PC-3 (cell line): ENCODE measurements at regions of chr16 and their contacts with region 1.

Region 1: DNA sequence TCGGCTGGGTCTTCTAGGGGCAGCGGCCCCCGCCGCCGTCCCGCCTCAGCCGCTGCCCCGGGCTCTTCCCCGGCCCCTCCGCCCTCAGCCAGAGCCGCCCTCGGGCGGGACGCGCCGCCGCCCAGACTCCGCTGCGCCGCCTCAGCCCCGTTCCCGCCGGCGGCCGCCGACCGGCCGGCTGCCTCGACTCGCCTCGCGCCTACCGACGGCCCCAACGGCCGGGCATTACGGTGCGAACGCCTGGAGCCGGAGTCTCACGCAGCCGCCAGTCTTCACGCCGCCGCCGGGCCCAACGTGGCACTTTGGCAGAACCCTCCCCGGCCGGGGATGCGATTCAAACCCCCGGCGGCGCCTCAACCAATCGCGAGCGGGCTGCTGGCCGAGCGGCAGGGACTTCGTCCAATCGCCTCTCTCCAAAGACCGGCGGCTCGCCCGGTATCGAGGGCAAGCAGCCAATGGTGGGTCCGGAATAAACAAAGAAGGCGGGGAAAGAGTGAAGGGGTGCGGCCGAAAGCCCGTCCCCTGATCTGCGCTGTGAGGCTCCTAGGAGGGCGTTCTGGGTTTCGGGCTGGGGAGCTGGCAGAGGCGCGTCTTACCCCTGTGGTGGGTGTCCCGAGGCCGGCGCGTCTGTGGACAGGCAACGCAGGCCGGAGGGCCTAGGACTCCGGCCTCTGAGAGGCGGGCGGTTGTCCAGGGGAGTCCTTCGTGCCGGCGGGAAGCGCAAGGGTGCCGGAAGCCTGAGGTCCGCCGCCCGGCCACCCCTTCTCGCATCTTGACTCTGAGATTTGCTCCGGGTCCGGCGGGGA is at the start of gene CDR2:
- DNase-seq: peak; percentile 95
- ATAC-seq: peak; percentile 83
- H3K4me3 ChIP-seq: peak within 1 kb of the TSS; percentile 87
- H3K27ac ChIP-seq: no peak within 1 kb of the TSS
- H3K4me1 ChIP-seq: peaks cover 29% of the 10 kb centered on the region
- H3K27me3 ChIP-seq: no peaks in the 10 kb centered on the region
- CTCF ChIP-seq: no peak
- total RNA-seq, gene CDR2: 14.1 and 14.7 TPM in 2 replicates

Region 2: DNA sequence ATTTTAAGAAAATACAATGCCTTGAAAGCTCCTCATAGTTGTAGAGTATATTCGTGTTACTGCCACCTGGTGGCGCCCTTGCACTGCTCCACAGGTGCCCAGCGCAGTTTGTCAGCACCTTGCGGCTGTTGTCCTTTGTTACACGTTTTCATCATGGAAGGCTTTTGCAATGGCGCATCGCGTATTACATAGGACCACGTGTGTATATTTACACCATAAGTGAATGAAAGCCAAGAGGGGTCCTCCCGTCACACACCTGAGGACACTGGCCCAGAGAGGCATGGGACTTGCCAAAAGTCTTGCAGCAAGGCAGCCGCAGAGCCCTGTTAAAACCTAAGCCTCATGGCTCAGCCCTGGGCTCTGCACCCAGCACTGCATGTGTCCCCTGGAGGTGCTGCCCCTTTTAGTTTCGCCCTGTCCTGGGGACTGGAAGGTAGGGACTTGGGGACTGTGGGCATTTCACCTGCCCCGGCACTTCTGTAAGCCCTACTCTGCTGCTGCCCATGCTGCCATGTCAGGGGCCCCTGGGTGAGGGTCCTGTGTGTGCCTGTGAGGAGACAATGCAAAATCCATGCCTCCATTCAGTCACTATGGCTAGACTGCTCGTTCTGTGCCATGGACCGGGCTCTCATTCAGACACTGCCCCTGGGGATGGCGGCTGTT is 53.0 kb before region 1 on chr16:
- CTCF ChIA-PET with region 1: interaction called, 3 read pairs
- POLR2A ChIA-PET with region 1: no interaction called
- intact Hi-C with region 1: loop called (anchors 10 kb)
- DNase-seq: peak; percentile 55
- ATAC-seq: peak; percentile 72
- H3K4me3 ChIP-seq: no peak overlapping the region
- H3K27ac ChIP-seq: no peak overlapping the region
- H3K4me1 ChIP-seq: no peaks in the 10 kb centered on the region
- H3K27me3 ChIP-seq: no peaks in the 10 kb centered on the region
- CTCF ChIP-seq: peak; percentile 89

Region 3: DNA sequence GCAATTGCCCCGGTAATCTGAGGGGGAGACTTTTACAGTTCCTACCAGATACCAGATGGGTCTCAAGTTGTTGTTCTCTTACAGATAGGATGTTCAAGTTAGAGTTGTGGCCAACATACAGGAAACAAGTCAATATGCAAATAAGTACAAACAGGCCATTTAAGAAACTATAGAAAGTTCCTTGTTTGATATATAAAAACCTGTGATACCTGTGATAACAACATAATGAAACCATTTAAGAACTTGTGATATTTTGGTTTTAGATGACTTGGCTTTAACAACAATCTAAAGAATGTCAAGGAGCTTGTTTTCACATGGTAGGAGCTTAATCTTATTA is 16.9 kb before region 1 on chr16:
- CTCF ChIA-PET with region 1: no interaction called
- POLR2A ChIA-PET with region 1: no interaction called
- intact Hi-C with region 1: no loop called
- DNase-seq: no peak
- ATAC-seq: no peak
- H3K4me3 ChIP-seq: no peak overlapping the region
- H3K27ac ChIP-seq: no peak overlapping the region
- H3K4me1 ChIP-seq: peaks cover 16% of the 10 kb centered on the region
- H3K27me3 ChIP-seq: no peaks in the 10 kb centered on the region
- CTCF ChIP-seq: no peak

Region 4: DNA sequence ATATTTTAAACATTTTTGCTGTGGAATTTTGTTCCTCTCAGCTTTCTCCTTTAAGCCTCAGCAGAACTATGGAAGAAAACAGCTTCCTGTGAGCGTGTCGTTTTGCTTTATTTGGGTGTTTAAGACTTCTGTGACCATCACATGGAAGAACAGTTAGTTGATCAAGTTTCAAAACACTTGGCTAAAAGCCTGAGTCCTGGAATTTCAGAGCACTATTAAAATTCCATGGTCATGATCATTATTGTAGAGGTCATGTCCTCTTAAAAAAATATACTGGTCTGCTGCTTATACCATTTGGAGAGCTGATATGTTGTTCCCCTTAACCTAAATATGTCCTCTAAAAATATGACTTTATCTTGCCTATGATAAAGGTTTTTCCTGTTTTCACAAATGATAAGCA is 12.5 kb after region 1 on chr16:
- CTCF ChIA-PET with region 1: no interaction called
- POLR2A ChIA-PET with region 1: no interaction called
- intact Hi-C with region 1: loop called (anchors 1 kb)
- DNase-seq: peak; percentile 88
- ATAC-seq: peak; percentile 94
- H3K4me3 ChIP-seq: no peak overlapping the region
- H3K27ac ChIP-seq: no peak overlapping the region
- H3K4me1 ChIP-seq: peaks cover 14% of the 10 kb centered on the region
- H3K27me3 ChIP-seq: no peaks in the 10 kb centered on the region
- CTCF ChIP-seq: no peak